MCF 10A (cell line): ENCODE measurements at regions of chr2 and their contacts with region 1.

Region 1: GRCh38 chr2:29309090-29310029 is 194.1 kb downstream of the CLIP4 start:
- DNase-seq: peak; percentile 82
- H3K4me3 Mint-ChIP-seq: no peak overlapping the region
- H3K27ac Mint-ChIP-seq: no peak overlapping the region
- H3K4me1 Mint-ChIP-seq: peaks cover 5% of the 10 kb centered on the region
- H3K27me3 Mint-ChIP-seq: peaks cover 53% of the 10 kb centered on the region
- CTCF ChIP-seq: peak; percentile 58

Region 2: GRCh38 chr2:29273685-29274611 is 35.4 kb before region 1 on chr2:
- CTCF ChIA-PET with region 1: interaction called, 10 read pairs
- POLR2A ChIA-PET with region 1: no interaction called
- intact Hi-C with region 1: no loop called
- DNase-seq: peak; percentile 71
- H3K4me3 Mint-ChIP-seq: no peak overlapping the region
- H3K27ac Mint-ChIP-seq: peak overlapping the region; percentile 5
- H3K4me1 Mint-ChIP-seq: peaks cover 25% of the 10 kb centered on the region
- H3K27me3 Mint-ChIP-seq: peaks cover 18% of the 10 kb centered on the region
- CTCF ChIP-seq: no peak

Region 3: DNA sequence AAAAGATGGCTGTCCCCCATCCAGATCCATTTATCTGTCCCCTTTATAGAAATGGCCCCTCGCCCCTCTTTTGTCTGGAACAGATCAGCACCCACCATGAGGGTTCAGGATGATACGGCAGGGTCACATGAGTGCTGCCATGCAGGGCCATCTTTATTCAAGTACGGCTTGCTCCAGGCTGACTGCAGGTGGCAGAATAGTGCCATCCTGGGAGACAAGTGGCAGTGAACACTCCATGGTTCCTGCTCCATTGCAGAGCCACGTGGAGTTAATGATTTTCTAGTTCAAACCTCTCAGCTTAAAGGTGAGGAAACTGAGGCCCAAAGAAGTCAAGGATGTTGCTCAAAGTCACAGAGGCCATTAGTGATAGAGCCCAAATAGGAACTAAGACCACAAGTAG is 13.5 kb before region 1 on chr2:
- CTCF ChIA-PET with region 1: interaction called, 20 read pairs
- POLR2A ChIA-PET with region 1: interaction called, 3 read pairs
- intact Hi-C with region 1: no loop called
- DNase-seq: peak; percentile 44
- H3K4me3 Mint-ChIP-seq: no peak overlapping the region
- H3K27ac Mint-ChIP-seq: no peak overlapping the region
- H3K4me1 Mint-ChIP-seq: no peaks in the 10 kb centered on the region
- H3K27me3 Mint-ChIP-seq: peaks cover 81% of the 10 kb centered on the region
- CTCF ChIP-seq: peak; percentile 33

Region 4: DNA sequence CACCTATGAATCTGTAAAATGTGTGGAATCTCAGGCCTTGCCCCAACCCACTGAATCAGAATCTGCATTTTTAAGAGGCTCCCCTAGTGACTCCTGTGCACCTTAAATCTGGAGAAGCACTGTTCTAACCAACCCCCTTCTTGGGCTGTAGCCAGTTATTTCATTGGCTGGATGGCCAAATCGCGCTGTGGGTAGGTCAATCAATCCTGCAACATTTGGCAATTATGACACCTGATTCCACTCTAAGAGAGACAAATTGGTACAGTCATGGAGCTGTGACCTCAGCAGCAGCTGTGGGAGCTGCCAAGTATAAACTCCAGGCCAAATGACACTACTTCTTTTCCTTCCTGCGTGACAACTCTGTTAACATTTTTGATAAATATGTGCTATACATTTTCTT is 14.6 kb after region 1 on chr2:
- CTCF ChIA-PET with region 1: interaction called, 16 read pairs
- POLR2A ChIA-PET with region 1: interaction called, 3 read pairs
- intact Hi-C with region 1: no loop called
- DNase-seq: peak; percentile 47
- H3K4me3 Mint-ChIP-seq: no peak overlapping the region
- H3K27ac Mint-ChIP-seq: no peak overlapping the region
- H3K4me1 Mint-ChIP-seq: no peaks in the 10 kb centered on the region
- H3K27me3 Mint-ChIP-seq: peaks cover 11% of the 10 kb centered on the region
- CTCF ChIP-seq: no peak

Region 5: DNA sequence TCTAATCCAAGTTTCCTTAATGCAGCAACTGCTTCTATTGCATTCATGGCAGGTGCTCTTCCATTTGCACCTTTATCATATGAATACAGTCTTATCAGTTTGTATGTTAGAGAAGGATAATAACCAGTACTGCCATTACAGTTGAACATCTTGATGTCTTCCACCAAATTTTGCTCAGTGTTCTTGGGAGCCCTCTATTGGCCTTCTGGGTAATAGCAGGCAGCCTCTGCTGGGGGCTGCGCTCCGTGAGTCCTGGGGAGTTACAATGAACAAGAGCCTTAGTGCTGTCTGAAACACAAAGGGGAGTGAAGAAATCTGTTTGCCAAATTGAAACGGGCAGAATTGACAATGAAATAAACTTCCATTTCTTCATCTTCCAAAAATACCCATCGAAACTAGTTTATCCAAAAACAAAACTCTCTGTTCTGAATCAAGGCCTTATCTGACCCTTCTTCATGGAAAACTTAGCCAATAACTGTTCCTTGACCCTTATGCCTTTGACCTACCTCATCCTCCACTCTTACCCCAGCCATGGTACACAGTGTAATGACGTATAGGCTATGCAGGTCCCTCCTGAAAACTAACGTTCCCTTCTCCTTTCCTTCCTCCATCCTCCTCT is 532.1 kb after region 1 on chr2:
- CTCF ChIA-PET with region 1: interaction called, 8 read pairs
- POLR2A ChIA-PET with region 1: no interaction called
- intact Hi-C with region 1: loop called (anchors 1 kb)
- DNase-seq: peak; percentile 46
- H3K4me3 Mint-ChIP-seq: no peak overlapping the region
- H3K27ac Mint-ChIP-seq: no peak overlapping the region
- H3K4me1 Mint-ChIP-seq: no peaks in the 10 kb centered on the region
- H3K27me3 Mint-ChIP-seq: peaks cover 44% of the 10 kb centered on the region
- CTCF ChIP-seq: peak; percentile 85